Activated CD8-positive, alpha-beta T cell treated with anti-CD3 and anti-CD28 coated beads for 36 hours (primary cell): ENCODE measurements at regions of chr3 and their contacts with region 1.

Region 1: DNA sequence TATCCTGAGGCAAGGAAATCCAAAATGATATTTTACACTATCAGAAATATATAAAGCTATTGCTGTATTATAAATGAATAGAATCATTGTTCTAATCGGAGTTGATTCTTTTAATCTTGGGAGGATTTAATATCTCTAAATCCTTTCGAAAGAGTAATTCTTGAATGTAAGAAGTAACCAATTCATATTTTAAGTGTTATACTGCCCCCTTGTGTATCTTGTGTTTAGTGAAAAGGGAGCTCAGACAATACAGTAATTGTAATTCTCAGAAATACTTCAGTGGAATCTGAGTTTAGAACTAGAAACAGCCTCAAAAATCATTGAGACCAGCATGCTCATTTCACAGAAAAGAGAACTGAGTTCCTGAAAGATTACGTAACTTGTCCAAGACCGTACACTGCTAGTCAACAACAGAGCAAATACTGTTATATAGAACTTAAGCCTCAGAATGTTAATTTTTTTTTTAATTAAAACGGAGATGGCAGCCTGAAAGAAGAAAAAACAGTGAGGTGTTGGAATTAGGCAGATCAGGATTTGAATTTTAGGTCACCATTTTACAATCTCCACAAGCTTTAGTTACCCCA is 42.9 kb downstream of the PLCH1 start:
- DNase-seq: no peak
- ATAC-seq: no peak
- H3K4me3 Mint-ChIP-seq: no peak overlapping the region
- H3K27ac Mint-ChIP-seq: no peak overlapping the region
- H3K4me1 Mint-ChIP-seq: no peaks in the 10 kb centered on the region
- H3K27me3 Mint-ChIP-seq: no peaks in the 10 kb centered on the region
- CTCF ChIP-seq: peak; percentile 62

Region 2: DNA sequence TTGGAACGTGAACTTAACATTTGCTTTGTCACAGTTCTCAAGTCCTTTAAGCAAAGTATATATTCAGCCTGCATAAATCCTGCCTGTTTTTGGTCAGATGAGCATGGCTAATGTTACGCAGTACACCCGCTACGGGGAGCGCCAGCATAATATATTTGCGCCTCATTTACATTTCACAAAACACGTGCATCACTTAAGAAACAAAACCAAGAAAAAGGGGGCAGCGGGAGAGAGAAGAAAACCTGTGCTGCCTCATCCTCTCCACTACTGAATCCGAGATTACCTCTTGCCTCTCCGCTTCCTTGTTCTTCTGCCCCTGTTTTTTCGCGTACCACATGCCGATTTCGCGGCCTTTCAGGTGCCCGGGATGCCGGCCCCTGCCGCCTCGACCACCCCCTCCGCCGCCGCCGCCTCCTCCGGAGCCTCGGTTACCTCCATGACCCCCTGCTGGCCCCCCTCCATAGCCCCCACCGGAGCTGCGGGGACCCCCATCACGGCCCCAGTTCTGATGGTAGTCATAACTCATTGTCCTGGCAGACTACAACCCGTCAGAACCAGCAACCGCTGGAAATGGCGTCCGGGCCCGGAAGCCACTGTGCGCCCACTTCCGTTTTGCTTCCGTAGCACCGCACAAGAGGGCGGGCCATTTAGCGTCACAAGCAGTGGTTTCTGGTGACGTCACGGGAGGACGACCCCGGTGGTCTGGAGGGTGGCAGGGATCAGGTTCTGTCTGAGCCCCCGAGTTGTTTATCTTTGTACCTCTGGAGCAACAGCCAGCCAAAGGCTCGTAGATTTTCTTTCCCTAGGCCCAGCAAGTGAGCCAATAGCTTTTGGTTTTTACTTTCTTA is 1377.9 kb before region 1 on chr3 and contains the start of gene DHX36:
- CTCF ChIA-PET with region 1: no interaction called
- POLR2A ChIA-PET with region 1: no interaction called
- intact Hi-C with region 1: loop called (anchors 10 kb)
- DNase-seq: peak; percentile 95
- ATAC-seq: peak; percentile 91
- H3K4me3 Mint-ChIP-seq: peak within 1 kb of the TSS; percentile 85
- H3K27ac Mint-ChIP-seq: peak within 1 kb of the TSS; percentile 98
- H3K4me1 Mint-ChIP-seq: peaks cover 22% of the 10 kb centered on the region
- H3K27me3 Mint-ChIP-seq: peaks cover 1% of the 10 kb centered on the region
- CTCF ChIP-seq: no peak
- total RNA-seq, gene DHX36: 74.2 to 78.3 TPM

Region 3: GRCh38 chr3:155352900-155353490 is 349.0 kb before region 1 on chr3:
- CTCF ChIA-PET with region 1: interaction called, 40 read pairs
- POLR2A ChIA-PET with region 1: no interaction called
- intact Hi-C with region 1: loop called (anchors 2 kb)
- DNase-seq: no peak
- ATAC-seq: no peak
- H3K4me3 Mint-ChIP-seq: no peak overlapping the region
- H3K27ac Mint-ChIP-seq: no peak overlapping the region
- H3K4me1 Mint-ChIP-seq: no peaks in the 10 kb centered on the region
- H3K27me3 Mint-ChIP-seq: peaks cover 2% of the 10 kb centered on the region
- CTCF ChIP-seq: peak; percentile 34

Region 4: DNA sequence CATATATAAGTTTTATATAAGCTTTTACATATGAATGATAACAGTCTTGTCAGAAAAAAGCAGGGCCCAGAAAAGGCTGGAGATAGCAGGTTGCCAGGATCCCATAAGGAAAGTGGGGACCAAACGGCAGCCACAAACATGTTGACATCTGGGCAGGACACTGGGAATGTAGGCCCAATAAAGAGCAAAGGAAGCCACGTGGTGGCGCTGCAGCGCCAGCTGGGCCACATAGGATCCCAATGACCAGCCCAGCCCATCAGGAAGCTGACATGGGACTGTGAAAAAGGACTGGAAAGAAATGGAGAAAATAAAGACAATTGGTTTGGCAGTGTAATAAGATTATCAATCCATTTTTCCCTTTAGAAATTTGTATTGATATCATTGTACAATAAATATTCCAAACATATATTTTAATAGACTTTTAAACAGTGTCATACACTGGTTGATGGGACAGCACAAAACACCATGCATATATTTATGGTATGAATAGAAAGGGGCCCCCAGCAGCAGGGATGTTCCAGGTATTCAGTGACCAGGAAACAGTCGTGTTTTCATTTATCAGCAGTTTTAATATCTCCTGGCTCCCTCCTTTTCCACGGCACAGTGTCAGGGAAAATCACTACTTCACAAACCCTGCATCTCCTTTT is 319.5 kb before region 1 on chr3:
- CTCF ChIA-PET with region 1: interaction called, 13 read pairs
- POLR2A ChIA-PET with region 1: no interaction called
- intact Hi-C with region 1: no loop called
- DNase-seq: peak; percentile 39
- ATAC-seq: no peak
- H3K4me3 Mint-ChIP-seq: no peak overlapping the region
- H3K27ac Mint-ChIP-seq: no peak overlapping the region
- H3K4me1 Mint-ChIP-seq: no peaks in the 10 kb centered on the region
- H3K27me3 Mint-ChIP-seq: peaks cover 3% of the 10 kb centered on the region
- CTCF ChIP-seq: peak; percentile 52

Region 5: DNA sequence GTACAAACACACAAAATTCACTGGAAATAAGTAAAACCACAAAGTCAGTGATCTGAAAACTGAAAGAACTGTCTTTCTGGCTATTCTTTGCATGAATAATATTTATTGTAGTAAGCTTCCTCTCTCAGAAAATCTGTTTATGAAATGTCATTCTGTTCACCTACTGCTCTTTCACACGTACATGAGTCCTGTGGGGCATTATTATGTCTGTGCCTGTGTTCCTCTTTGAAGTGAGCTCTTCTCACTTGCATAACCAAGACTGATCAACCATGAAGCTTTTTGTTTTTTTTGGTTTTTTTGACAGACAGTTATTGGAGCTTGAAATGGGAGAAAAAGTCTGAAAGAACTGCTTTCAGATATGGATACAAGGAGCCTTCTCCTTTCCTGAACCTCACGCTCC is 152.9 kb before region 1 on chr3:
- CTCF ChIA-PET with region 1: no interaction called
- POLR2A ChIA-PET with region 1: no interaction called
- intact Hi-C with region 1: no loop called
- DNase-seq: no peak
- ATAC-seq: peak; percentile 71
- H3K4me3 Mint-ChIP-seq: no peak overlapping the region
- H3K27ac Mint-ChIP-seq: peak overlapping the region; percentile 46
- H3K4me1 Mint-ChIP-seq: peaks cover 25% of the 10 kb centered on the region
- H3K27me3 Mint-ChIP-seq: no peaks in the 10 kb centered on the region
- CTCF ChIP-seq: no peak

Region 6: DNA sequence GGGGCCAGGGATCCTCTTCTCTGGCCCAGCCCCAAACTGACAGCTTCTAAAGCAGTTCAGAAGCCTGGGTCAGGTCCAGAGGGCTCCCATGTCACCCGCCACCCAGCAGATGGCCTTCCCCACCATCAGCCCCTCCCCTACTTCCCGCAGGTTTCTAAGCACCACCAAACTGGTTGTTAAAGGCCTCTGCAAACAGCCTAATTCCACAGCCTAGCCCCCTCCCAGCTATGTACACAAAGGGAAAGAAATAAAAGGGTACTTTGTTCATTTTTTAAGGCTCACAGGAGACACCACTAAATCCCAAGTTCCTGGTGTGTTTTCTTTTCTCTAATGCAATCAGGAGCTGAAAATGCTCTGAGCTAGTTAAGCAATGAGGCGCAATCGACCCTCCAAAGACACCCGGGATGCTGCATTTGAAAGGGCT is 12.3 kb after region 1 on chr3:
- CTCF ChIA-PET with region 1: interaction called, 16 read pairs
- POLR2A ChIA-PET with region 1: no interaction called
- intact Hi-C with region 1: no loop called
- DNase-seq: no peak
- ATAC-seq: no peak
- H3K4me3 Mint-ChIP-seq: no peak overlapping the region
- H3K27ac Mint-ChIP-seq: no peak overlapping the region
- H3K4me1 Mint-ChIP-seq: no peaks in the 10 kb centered on the region
- H3K27me3 Mint-ChIP-seq: no peaks in the 10 kb centered on the region
- CTCF ChIP-seq: no peak

Region 7: GRCh38 chr3:155730847-155731246 is 28.9 kb after region 1 on chr3:
- CTCF ChIA-PET with region 1: no interaction called
- POLR2A ChIA-PET with region 1: no interaction called
- intact Hi-C with region 1: no loop called
- DNase-seq: no peak
- ATAC-seq: no peak
- H3K4me3 Mint-ChIP-seq: no peak overlapping the region
- H3K27ac Mint-ChIP-seq: no peak overlapping the region
- H3K4me1 Mint-ChIP-seq: no peaks in the 10 kb centered on the region
- H3K27me3 Mint-ChIP-seq: peaks cover 10% of the 10 kb centered on the region
- CTCF ChIP-seq: no peak